Dorsolateral prefrontal cortex (tissue), 120 donors: ENCODE measurements at regions of chr1 and their contacts with region 1.

Region 1: GRCh38 chr1:245156081-245156735 is 1.4 kb downstream of the KIF26B start:
- DNase-seq: peak; percentile 44 to 93 (median 78)
- H3K4me3 ChIP-seq: peak overlapping the region; percentile 41 to 76 (median 67)
- H3K27ac ChIP-seq: peak overlapping the region in 35 of 59 donors; percentile 14 to 93 (median 58)
- H3K27me3 ChIP-seq: peaks cover 0 to 42% (median 4%) of the 10 kb centered on the region in 45 donors
- CTCF ChIP-seq: peak in 54 of 56 donors; percentile 34 to 83 (median 62)

Region 2: DNA sequence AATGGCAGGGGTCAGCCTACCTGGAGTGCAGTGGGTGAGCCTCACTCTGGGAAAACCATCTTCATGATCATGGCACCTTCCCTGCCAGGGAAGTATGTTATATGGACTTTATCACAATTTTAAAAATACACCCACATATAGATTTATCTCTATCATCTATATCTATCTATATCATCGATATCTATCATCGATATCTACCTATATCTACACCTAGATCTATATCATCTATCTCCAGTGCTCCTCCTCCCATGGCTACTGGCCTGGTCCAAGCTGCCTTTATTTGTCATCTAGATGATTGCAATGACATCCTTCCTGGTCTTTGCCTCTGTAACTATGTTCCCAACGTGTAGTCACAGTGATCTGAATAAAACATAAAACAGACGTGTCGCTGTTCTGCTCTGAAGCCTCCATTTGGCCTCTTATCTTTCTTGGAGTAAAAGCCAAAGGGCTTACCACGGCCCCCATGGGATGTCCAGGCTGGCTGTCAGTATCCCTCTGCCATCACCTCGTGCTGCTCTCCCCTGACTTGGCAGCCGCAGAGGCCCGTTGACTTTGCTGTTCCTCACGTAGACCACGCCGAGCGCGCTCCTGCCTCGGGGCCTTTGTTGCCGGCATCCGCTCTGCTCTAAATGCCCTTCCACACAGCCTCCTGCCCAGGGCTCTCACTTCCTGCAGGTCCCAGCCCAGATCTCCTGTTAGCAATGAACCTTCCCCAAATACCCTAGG is 22.1 kb before region 1 on chr1:
- intact Hi-C with region 1: no loop called
- DNase-seq: no peak
- H3K4me3 ChIP-seq: no peak overlapping the region
- H3K27ac ChIP-seq: no peak overlapping the region
- H3K27me3 ChIP-seq: peaks cover 0 to 4% (median 0%) of the 10 kb centered on the region in 45 donors
- CTCF ChIP-seq: no peak

Region 3: DNA sequence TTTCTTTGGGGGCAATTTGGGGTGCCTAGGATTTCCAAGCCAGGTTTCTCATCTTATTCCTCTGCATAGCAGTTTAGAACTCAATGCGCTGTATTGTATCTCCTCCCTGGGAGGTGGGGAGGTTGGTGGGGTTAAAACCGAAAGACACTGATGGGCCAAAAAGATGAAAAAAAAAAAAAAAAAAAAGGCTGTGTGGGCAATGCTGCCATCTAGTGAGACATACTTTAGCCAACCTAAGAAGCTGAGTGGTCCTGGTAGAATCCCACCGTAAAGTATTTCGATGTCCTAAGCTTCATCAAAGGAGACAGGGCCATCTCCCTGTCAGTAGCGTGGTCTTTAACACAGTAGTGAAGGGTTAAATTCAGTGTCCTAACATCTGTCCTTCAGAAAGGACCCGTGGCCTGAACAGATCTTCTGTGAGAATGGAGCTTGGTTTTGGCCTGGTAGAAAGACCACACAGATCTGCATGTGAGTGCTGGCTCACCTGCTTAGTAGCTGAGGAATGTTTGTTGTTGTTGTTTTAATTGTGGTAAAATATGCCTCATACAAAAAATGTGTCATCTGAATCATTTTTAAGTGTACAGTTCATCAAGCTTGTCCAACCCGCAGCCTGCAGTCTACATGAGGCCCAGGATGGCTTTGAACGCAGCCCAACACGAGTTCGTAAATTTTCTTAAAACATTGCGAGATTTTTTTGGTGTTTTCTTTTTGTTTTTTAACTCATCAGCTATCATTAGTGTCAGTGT is 224.8 kb after region 1 on chr1:
- intact Hi-C with region 1: loop called (anchors 5 to 10 kb)
- DNase-seq: no peak
- H3K4me3 ChIP-seq: no peak overlapping the region
- H3K27ac ChIP-seq: no peak overlapping the region
- H3K27me3 ChIP-seq: peaks cover 0 to 5% (median 0%) of the 10 kb centered on the region in 45 donors
- CTCF ChIP-seq: peak in 50 of 56 donors; percentile 8 to 64 (median 43)

Region 4: DNA sequence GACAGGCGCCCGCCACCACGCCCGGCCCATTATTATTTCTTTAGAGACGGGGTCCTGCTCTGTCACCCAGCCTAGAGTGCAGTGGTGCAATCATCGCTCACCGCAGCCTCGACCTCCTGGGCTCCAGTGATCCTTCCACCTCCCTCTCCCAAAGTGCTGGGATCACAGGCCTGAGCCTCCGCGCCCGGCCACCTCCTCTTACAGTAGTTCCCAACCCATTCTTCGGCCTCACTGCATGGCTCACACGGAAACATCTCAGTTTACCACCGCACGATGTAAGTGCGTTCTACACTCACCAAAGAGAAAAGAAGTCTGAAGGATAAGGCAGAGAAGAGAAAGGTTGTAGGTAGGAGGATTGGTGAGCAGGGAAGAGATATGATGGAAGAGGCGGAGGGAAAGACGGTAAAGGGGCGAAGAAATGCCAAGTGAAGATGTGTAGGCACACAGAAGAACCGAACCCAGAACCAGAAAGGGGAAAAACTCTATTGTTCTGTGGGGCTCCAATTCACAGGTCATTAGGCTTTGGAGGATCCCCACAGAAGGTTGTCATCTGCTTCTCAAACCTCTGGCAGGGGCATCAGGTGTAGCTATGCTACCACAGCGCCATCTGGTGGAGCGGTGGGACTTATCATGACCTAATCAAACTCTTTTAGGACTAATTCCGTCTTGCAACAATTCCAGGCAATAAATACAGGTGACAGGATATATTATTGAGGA is 846.7 kb after region 1 on chr1:
- intact Hi-C with region 1: loop called (anchors 2 to 5 kb)
- DNase-seq: peak; percentile 78 to 94 (median 85)
- H3K4me3 ChIP-seq: no peak overlapping the region
- H3K27ac ChIP-seq: no peak overlapping the region
- H3K27me3 ChIP-seq: no peaks in the 10 kb centered on the region
- CTCF ChIP-seq: peak; percentile 75 to 96 (median 90)

Region 5: DNA sequence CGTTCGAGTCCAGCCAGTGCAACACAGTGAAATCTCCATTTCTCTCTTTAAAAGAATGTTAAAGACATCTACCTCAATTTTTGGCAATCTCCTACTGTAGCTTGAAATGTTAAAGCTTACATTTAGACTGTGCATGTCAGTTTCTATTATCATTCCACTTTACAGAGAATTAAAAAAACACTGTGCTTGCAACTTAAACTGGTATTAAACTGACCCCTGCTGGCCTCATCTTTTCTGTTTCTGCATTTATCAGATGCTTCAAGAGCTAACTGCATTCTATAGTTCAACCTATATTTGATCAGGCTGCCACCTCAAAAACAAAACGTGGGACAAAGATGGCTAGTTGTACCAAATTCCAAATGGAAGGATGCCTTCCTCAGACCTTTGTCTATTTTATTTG is 1124.3 kb after region 1 on chr1:
- intact Hi-C with region 1: loop called in 1 of 2 experiments (anchors 5 kb)
- DNase-seq: no peak
- H3K4me3 ChIP-seq: no peak overlapping the region
- H3K27ac ChIP-seq: no peak overlapping the region
- H3K27me3 ChIP-seq: no peaks in the 10 kb centered on the region
- CTCF ChIP-seq: peak in 49 of 56 donors; percentile 13 to 66 (median 44)

Region 6: GRCh38 chr1:246450611-246451251 is 1294.5 kb after region 1 on chr1:
- intact Hi-C with region 1: loop called in 1 of 2 experiments (anchors 5 kb)
- DNase-seq: no peak
- H3K4me3 ChIP-seq: no peak overlapping the region
- H3K27ac ChIP-seq: no peak overlapping the region
- H3K27me3 ChIP-seq: no peaks in the 10 kb centered on the region
- CTCF ChIP-seq: peak; percentile 33 to 82 (median 66)

Region 7: GRCh38 chr1:246497331-246497915 is 1341.2 kb after region 1 on chr1:
- intact Hi-C with region 1: loop called (anchors 2 to 10 kb)
- DNase-seq: no peak
- H3K4me3 ChIP-seq: no peak overlapping the region
- H3K27ac ChIP-seq: no peak overlapping the region
- H3K27me3 ChIP-seq: no peaks in the 10 kb centered on the region
- CTCF ChIP-seq: peak; percentile 49 to 92 (median 77)

Region 8: GRCh38 chr1:246699095-246699735 is 1543.0 kb after region 1 on chr1:
- intact Hi-C with region 1: loop called in 1 of 2 experiments (anchors 10 kb)
- DNase-seq: peak; percentile 53 to 89 (median 80)
- H3K4me3 ChIP-seq: peak overlapping the region in 51 of 59 donors; percentile 5 to 69 (median 46)
- H3K27ac ChIP-seq: peak overlapping the region in 20 of 59 donors; percentile 1 to 84 (median 46)
- H3K27me3 ChIP-seq: no peaks in the 10 kb centered on the region
- CTCF ChIP-seq: peak; percentile 69 to 95 (median 84)